ENCODE measurements at regions of chr3 and their contacts with region 1.

Region 1: GRCh38 chr3:197298341-197298857 is at the start of gene DLG1:
- DNase-seq: peak; percentile 38 to 93
- H3K4me3 ChIP-seq: peak within 1 kb of the TSS; percentile 87 to 98
- H3K27ac ChIP-seq: peak within 1 kb of the TSS; percentile 89 to 91
- H3K4me1 ChIP-seq: peaks cover 0 to 14% of the 10 kb centered on the region in 2 donors
- H3K27me3 ChIP-seq: no peaks in the 10 kb centered on the region
- CTCF ChIP-seq: no peak
- total RNA-seq, gene DLG1: 31.0 TPM

Region 2: DNA sequence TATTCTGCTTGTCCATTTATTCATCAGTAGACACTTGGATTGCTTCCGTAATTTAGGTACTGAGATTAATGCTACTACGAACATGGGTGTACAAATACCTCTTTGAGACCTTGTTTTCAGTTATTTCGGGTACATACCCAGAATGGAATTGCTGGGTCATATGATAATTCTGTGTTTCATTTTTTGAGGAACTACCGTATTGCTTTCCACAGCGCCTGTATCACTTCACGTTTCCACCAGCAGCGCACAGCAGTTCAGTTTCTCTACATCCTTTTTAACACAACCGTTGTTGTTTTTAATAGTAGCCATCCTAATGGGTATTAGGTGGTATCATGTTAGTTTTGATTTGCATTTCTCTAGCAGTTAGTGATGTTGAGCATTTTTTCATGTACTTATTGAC is 549.3 kb before region 1 on chr3:
- intact Hi-C with region 1: no loop called
- DNase-seq: no peak
- H3K4me3 ChIP-seq: no peak overlapping the region
- H3K27ac ChIP-seq: no peak overlapping the region
- H3K4me1 ChIP-seq: no peaks in the 10 kb centered on the region
- H3K27me3 ChIP-seq: no peaks in the 10 kb centered on the region
- CTCF ChIP-seq: no peak

Region 3: DNA sequence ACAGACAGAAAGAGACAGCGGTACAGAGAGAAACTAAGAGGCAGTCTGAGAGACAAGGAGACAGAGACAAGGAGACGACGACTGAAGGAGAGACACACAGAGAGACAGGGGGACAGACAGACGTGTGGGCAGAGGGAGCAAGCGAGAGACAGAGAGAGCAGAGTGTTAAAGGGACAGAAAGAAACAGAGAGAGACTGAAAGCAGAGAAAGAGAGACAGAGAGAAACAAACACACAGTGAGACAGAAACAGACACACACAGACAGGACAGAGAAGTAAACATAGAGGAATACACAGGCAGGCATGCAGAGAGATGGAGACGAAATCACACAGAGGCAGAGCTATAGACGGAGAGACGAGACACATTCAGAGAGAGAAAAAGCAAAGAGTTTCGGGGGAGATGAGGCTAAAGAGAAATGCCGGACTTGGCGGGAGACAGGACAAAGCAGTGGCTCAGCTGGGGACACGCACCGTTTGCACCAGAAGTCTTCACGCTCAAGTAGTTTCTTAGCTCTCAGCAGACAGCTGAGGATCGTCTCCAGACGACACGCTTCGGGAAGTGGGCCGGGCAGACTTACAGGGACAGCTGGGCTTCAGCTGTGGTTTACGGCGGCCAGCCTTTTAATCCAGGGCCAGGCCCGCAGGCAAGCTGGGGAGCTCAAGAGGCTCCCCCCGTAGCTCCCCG is 56.1 kb after region 1 on chr3:
- intact Hi-C with region 1: loop called (anchors 5 kb)
- DNase-seq: no peak
- H3K4me3 ChIP-seq: no peak overlapping the region
- H3K27ac ChIP-seq: no peak overlapping the region
- H3K4me1 ChIP-seq: peaks cover 0 to 4% of the 10 kb centered on the region in 2 donors
- H3K27me3 ChIP-seq: no peaks in the 10 kb centered on the region
- CTCF ChIP-seq: no peak

Region 4: DNA sequence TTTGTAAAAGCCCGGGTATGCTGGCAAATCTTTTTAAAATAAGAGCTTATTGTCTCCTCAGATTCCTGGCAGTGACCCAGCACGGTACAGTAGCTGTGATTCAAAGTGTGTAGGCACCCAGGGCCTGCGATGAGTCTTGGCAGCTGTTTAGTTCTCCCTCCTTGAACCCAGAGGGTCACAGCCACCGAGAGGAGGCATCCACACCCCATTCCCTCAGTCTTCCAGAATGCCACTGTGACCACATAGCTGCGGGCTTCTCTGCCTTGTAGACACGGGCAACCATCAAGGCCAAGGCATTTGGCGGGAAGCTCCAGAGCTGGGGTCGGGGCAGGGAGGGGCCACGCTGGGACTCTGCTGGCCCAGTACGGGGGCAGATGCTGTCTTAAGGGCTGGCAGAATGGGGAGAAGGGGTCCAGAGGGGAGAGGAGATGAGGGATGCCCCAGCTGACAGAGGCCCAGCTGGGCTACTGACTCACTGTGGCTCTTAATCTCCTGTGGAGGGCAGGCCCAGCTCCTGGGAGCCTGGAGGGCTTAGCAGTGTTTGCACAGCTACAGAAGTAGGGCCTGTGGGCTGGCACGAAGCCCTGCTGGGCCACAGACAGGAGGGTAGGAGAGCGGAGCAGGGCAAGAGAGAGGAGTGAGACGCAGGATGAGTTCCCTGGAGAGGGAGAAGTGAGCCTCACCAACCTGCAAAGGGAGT is 68.8 kb after region 1 on chr3:
- intact Hi-C with region 1: loop called (anchors 5 kb)
- DNase-seq: peak in 1 of 2 donors; percentile 65
- H3K4me3 ChIP-seq: no peak overlapping the region
- H3K27ac ChIP-seq: peak overlapping the region in 1 of 2 donors; percentile 48
- H3K4me1 ChIP-seq: peaks cover 9 to 12% of the 10 kb centered on the region in 2 donors
- H3K27me3 ChIP-seq: no peaks in the 10 kb centered on the region
- CTCF ChIP-seq: no peak

Region 5: GRCh38 chr3:197554562-197555280 is 256.3 kb after region 1 on chr3:
- intact Hi-C with region 1: loop called (anchors 5 kb)
- DNase-seq: peak; percentile 75 to 97
- H3K4me3 ChIP-seq: peak overlapping the region; percentile 69 to 80
- H3K27ac ChIP-seq: peak overlapping the region; percentile 82 to 93
- H3K4me1 ChIP-seq: peaks cover 0 to 12% of the 10 kb centered on the region in 2 donors
- H3K27me3 ChIP-seq: no peaks in the 10 kb centered on the region
- CTCF ChIP-seq: peak; percentile 41 to 60 (median 47)

Measured in ascending aorta (tissue), 2 donors.